CD8-positive, alpha-beta T cell (primary cell): ENCODE measurements at regions of chr19 and their contacts with region 1.

Region 1: DNA sequence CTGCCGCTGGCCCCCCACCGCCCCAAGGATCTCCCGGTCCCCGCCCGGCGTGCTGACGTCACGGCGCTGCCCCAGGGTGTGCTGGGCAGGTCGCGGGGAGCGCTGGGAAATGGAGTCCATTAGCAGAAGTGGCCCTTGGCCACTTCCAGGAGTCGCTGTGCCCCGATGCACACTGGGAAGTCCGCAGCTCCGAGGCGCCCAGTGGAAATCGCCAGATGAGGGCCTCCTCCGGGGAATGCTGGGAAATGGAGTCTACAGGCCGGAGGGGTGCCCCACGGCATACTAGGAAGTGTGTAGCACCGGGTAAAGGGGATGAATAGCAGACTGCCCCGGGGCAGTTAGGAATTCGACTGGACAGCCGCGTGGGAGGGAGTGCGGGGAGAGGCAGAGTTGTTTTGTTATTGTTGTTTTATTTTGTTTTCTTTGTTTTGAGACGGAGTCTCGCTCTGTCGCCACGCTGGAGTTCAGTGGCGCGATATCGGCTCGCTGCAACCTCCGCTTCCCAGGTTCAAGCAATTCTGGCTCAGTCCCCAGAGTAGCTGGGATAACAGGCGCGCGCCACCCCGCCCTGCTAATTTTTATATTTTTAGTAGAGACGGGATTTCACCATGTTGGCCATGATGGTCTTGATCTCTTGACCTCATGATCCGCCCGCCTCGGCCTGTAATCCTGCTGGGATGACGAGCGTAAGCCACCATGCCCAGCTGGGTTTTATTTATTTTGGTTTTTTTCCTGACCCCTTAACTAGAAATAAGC is at the start of gene PPP1R12C:
- DNase-seq: peak; percentile 89 to 99 (median 97)
- ATAC-seq: peak; percentile 89
- H3K4me3 ChIP-seq: peak within 1 kb of the TSS; percentile 83 to 89
- H3K4me3 Mint-ChIP-seq: peak within 1 kb of the TSS; percentile 97
- H3K27ac ChIP-seq: peak within 1 kb of the TSS; percentile 61 to 84
- H3K27ac Mint-ChIP-seq: peak within 1 kb of the TSS; percentile 93
- H3K4me1 ChIP-seq: peaks cover 19% of the 10 kb centered on the region
- H3K4me1 Mint-ChIP-seq: peaks cover 34% of the 10 kb centered on the region
- H3K27me3 ChIP-seq: no peaks in the 10 kb centered on the region
- H3K27me3 Mint-ChIP-seq: no peaks in the 10 kb centered on the region
- CTCF ChIP-seq: no peak
- total RNA-seq, gene PPP1R12C: 93.8 to 97.6 TPM

Region 2: DNA sequence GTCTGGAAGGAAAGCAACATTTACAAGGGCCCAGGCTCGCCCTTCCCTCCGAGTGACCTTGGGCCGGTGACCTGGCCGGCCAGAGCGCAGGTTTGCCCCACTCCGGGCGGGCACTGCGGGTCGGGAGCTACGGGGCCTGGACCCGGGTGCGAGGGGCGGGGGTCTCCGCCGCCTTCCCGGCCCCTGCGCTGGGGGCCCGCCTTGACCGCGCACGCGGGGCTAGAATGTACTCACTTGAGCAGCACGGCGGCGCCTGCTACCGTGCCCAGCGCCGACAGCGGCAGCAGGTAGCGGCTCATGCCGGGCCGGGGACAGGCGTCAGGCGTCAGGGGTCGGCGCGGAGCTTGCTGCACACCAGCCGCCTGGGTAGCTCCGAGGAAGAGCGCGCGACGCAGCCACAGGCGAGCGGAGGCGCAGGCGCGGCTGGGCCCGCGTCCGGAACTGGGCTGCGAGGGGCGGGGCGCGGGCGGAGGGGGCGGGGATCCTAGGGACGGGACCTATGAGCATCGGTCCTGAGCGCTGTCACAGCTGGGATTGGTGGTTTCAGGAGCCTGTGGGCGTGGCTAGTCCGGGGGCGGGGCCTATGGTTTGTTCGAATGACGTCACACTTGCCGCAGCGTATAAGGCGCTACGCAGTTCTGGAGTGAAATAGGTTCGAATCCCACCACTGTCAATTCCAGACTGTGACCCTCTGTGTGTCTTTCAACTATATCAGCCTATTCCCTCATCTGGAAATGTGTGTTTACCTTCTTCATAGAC is 54.9 kb before region 1 on chr19 and contains the start of gene RDH13:
- CTCF ChIA-PET with region 1: no interaction called
- POLR2A ChIA-PET with region 1: no interaction called
- intact Hi-C with region 1: loop called (anchors 1 to 2 kb)
- DNase-seq: peak; percentile 96 to 99 (median 97)
- ATAC-seq: peak; percentile 99
- H3K4me3 ChIP-seq: peak within 1 kb of the TSS; percentile 60 to 87
- H3K4me3 Mint-ChIP-seq: peak within 1 kb of the TSS; percentile 85
- H3K27ac ChIP-seq: peak within 1 kb of the TSS; percentile 62 to 67
- H3K27ac Mint-ChIP-seq: peak within 1 kb of the TSS; percentile 69
- H3K4me1 ChIP-seq: peaks cover 8% of the 10 kb centered on the region
- H3K4me1 Mint-ChIP-seq: peaks cover 25% of the 10 kb centered on the region
- H3K27me3 ChIP-seq: peaks cover 3 to 10% of the 10 kb centered on the region in 2 experiments
- H3K27me3 Mint-ChIP-seq: peaks cover 14% of the 10 kb centered on the region
- CTCF ChIP-seq: no peak
- total RNA-seq, gene RDH13: 12.4 to 13.4 TPM

Region 3: DNA sequence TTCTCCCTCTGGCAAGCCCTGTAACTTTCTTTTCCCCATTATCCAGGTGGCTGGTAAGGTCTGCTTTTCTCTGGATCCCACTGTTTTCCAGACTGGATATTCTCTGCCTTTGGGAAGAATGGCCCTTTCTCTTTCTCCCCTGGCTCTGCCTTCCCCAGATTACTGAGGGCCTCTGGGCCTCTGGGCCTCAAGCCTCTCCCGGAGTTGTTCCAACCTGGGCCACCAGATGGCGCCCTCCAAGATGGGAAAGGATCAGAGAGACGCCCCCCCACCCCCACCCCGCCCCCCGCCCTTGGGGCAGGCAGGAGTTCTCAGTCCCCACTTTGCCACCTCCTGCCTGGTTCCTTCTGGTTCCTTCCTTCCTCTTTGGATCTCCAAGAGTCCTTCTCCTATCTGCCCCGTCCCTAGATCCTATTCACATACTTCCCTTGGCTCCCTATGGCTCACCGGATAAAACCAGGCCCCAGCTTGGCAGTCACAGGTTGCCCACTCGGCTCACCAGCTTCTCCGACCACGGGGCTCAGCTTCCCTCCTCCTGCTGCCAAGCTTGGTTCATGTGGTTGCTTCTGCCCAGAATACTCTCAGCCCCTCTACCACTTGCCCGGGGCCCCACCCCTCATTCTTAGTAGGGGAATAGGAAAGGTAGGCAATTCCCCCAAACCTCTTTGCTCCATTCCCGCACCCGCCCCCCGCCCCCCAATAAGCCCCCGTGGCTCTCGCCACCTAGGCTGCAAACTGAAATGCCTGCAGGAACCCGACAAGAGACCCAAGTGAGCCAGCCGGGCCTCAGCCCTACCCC is 29.1 kb before region 1 on chr19:
- CTCF ChIA-PET with region 1: interaction called, 5 read pairs
- POLR2A ChIA-PET with region 1: interaction called, 6 read pairs
- intact Hi-C with region 1: loop called in 1 of 2 experiments (anchors 2 kb)
- DNase-seq: peak; percentile 50 to 85 (median 77)
- ATAC-seq: peak; percentile 64
- H3K4me3 ChIP-seq: no peak overlapping the region
- H3K4me3 Mint-ChIP-seq: peak overlapping the region; percentile 58
- H3K27ac ChIP-seq: no peak overlapping the region
- H3K27ac Mint-ChIP-seq: no peak overlapping the region
- H3K4me1 ChIP-seq: peaks cover 18% of the 10 kb centered on the region
- H3K4me1 Mint-ChIP-seq: peaks cover 16% of the 10 kb centered on the region
- H3K27me3 ChIP-seq: peaks cover 13 to 18% of the 10 kb centered on the region in 2 experiments
- H3K27me3 Mint-ChIP-seq: peaks cover 44% of the 10 kb centered on the region
- CTCF ChIP-seq: peak; percentile 83

Region 4: DNA sequence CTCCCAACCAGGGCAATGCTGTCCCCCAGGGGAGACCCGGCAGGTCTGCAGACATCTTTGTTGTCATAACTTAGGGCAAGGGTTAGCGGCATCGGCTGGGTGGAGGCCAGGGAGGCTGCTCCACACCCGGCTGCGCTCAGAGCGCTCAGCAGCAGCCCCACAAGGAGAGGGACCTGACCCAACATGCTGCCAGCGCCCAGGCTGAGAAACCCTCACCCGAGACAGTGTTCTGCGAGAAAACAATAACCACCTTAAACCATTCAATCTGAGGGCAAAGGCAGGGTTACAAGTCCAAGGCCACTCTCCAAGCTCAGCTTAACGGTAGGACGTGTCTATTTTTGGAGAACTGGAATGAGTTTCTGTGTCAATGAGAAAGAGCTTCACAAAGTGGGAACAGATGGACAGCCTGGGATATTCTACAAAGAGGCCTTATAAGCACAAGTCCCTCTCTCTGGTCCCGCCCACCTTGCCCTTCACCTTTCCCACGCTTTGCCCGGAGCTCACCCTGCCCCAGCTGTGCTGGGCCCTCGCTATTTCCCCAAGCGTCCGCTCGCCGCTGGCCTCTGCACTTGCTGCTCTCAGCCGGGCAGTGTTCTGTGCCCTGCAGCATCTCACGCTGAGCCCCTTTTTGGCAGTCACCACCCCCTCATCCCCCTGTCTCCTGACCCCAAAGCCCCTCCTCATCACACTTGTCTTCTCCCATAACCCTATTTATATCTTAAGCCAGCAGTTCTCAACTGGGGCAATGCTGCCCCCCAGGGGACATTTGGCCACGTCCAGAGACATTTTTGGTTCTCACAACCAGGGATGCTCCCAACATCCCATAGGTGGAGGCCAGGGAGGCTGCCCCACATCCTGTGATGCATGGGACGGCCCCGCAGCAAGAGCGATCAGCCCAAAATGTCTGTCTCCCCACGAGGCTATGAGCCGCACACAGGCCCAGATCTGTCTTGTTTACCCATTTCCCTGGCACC is 18.0 kb before region 1 on chr19:
- CTCF ChIA-PET with region 1: no interaction called
- POLR2A ChIA-PET with region 1: no interaction called
- intact Hi-C with region 1: no loop called
- DNase-seq: no peak
- ATAC-seq: no peak
- H3K4me3 ChIP-seq: no peak overlapping the region
- H3K4me3 Mint-ChIP-seq: no peak overlapping the region
- H3K27ac ChIP-seq: no peak overlapping the region
- H3K27ac Mint-ChIP-seq: no peak overlapping the region
- H3K4me1 ChIP-seq: no peaks in the 10 kb centered on the region
- H3K4me1 Mint-ChIP-seq: no peaks in the 10 kb centered on the region
- H3K27me3 ChIP-seq: peaks cover 0 to 2% of the 10 kb centered on the region in 2 experiments
- H3K27me3 Mint-ChIP-seq: no peaks in the 10 kb centered on the region
- CTCF ChIP-seq: no peak

Region 5: DNA sequence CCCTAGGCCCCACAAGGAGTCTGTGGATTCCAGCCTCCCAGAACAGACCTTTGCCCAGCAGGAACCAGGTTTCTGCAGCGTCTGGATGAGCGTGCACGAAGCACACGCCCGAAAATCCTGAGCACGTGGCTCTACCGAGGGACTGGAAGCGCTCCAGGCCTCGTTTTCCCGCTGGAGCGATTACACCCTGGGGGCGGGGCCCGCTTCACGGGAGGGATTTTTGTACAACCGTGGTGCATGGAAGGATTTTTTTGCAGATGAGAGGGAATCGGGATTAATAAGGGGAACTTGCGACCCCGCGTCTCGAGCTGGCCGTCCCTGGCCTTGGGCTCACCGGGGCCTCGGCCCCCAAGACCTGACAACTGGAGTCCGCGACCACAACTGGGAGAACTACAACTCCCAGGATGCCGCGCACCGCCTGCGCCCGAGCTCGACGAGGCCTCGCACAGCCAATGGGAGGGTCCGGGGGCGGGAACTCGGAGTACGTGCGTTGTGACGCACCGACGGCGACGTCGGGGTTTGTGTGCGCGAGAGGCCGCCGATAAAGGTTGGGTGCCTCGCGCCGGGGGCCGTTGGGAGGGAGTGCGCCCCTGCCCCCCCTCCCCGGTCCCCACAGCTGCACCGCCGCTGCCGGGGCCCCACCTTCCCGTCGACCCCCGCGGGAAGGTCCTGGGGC is 358.4 kb after region 1 on chr19 and contains the start of gene ZNF628:
- CTCF ChIA-PET with region 1: no interaction called
- POLR2A ChIA-PET with region 1: no interaction called
- intact Hi-C with region 1: loop called in 1 of 2 experiments (anchors 1 kb)
- DNase-seq: peak; percentile 95 to 99 (median 98)
- ATAC-seq: peak; percentile 93
- H3K4me3 ChIP-seq: peak within 1 kb of the TSS; percentile 70 to 72
- H3K4me3 Mint-ChIP-seq: peak within 1 kb of the TSS; percentile 85
- H3K27ac ChIP-seq: peak within 1 kb of the TSS; percentile 58 to 91
- H3K27ac Mint-ChIP-seq: peak within 1 kb of the TSS; percentile 88
- H3K4me1 ChIP-seq: peaks cover 17% of the 10 kb centered on the region
- H3K4me1 Mint-ChIP-seq: peaks cover 34% of the 10 kb centered on the region
- H3K27me3 ChIP-seq: no peaks in the 10 kb centered on the region
- H3K27me3 Mint-ChIP-seq: no peaks in the 10 kb centered on the region
- CTCF ChIP-seq: no peak
- total RNA-seq, gene ZNF628: 27.0 to 27.8 TPM

Region 6: GRCh38 chr19:56140583-56141416 is 1023.0 kb after region 1 on chr19 and contains the start of gene ZNF444:
- CTCF ChIA-PET with region 1: no interaction called
- POLR2A ChIA-PET with region 1: no interaction called
- intact Hi-C with region 1: loop called in 1 of 2 experiments (anchors 5 kb)
- DNase-seq: peak; percentile 98 to 100 (median 99)
- ATAC-seq: peak; percentile 84
- H3K4me3 ChIP-seq: peak within 1 kb of the TSS; percentile 69 to 74
- H3K4me3 Mint-ChIP-seq: peak within 1 kb of the TSS; percentile 92
- H3K27ac ChIP-seq: peak within 1 kb of the TSS; percentile 66 to 86
- H3K27ac Mint-ChIP-seq: peak within 1 kb of the TSS; percentile 93
- H3K4me1 ChIP-seq: peaks cover 20% of the 10 kb centered on the region
- H3K4me1 Mint-ChIP-seq: peaks cover 38% of the 10 kb centered on the region
- H3K27me3 ChIP-seq: no peaks in the 10 kb centered on the region
- H3K27me3 Mint-ChIP-seq: no peaks in the 10 kb centered on the region
- CTCF ChIP-seq: no peak
- total RNA-seq, gene ZNF444: 17.2 to 18.6 TPM